ENCODE measurements at regions of chr17 and their contacts with region 1.

Region 1: GRCh38 chr17:57597531-57598453 is 147.3 kb downstream of the CCDC182 start:
- DNase-seq: peak in 4 of 10 donors; percentile 8 to 30 (median 18)
- ATAC-seq: no peak
- H3K4me3 Mint-ChIP-seq: peak overlapping the region in 5 of 10 donors; percentile 15 to 81 (median 63)
- H3K27ac Mint-ChIP-seq: peak overlapping the region; percentile 88 to 100 (median 94)
- H3K4me1 Mint-ChIP-seq: peaks cover 40 to 63% (median 55%) of the 10 kb centered on the region in 4 donors
- H3K27me3 Mint-ChIP-seq: no peaks in the 10 kb centered on the region

Region 2: GRCh38 chr17:57463103-57463851 is 134.5 kb before region 1 on chr17:
- POLR2A ChIA-PET with region 1: no interaction called
- DNase-seq: no peak
- ATAC-seq: no peak
- H3K4me3 Mint-ChIP-seq: peak overlapping the region in 1 of 10 donors; percentile 12
- H3K27ac Mint-ChIP-seq: peak overlapping the region in 3 of 10 donors; percentile 70 to 82 (median 76)
- H3K4me1 Mint-ChIP-seq: peaks cover 35 to 73% (median 60%) of the 10 kb centered on the region in 4 donors
- H3K27me3 Mint-ChIP-seq: no peaks in the 10 kb centered on the region

Region 3: DNA sequence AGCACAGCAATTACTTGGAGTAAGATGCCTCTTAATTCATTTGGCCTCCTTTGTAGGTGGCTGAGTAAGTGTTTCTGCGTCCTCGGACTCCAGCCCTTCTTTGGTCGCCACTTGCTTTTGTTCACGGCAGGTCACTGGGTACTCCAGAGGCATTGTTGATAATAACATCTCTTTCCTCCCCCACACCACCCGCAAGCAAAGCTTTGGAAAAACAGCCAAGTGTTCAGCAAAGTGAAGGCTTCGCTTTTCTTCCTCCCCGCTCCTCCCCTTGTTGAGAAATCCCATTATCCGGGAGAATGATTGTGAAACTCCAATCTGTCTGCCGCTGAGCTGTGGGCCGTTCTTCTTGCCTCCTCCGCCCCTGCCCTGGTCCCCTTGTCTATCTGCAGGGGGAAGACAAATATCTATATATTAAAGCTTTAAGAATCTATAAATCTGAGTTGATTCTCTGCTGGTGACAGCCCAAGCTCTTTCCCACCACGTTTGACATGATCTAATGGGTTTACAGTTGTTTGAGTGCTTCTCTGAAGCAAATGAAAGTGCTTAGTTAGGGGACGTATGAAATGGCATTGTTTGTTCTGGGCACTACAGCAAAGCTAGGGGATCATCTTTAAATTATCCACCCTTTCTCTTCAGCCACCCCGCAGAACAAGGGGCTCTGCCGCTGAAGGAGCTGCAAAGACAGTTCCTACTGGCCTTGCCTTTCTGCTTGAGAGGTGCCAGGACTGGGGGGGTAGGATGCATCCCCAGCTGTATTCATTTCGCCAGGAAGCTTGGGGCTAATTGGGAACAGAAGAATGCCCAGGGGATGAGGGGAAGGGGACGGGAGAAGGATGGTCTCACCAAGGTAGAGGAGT is 19.8 kb before region 1 on chr17:
- POLR2A ChIA-PET with region 1: interaction called, 14 read pairs
- DNase-seq: peak in 1 of 10 donors; percentile 1
- ATAC-seq: no peak
- H3K4me3 Mint-ChIP-seq: no peak overlapping the region
- H3K27ac Mint-ChIP-seq: peak overlapping the region in 2 of 10 donors; percentile 37 to 66
- H3K4me1 Mint-ChIP-seq: peaks cover 12 to 30% (median 21%) of the 10 kb centered on the region in 4 donors
- H3K27me3 Mint-ChIP-seq: no peaks in the 10 kb centered on the region

Region 4: GRCh38 chr17:57615836-57616757 is 18.3 kb after region 1 on chr17:
- POLR2A ChIA-PET with region 1: no interaction called
- DNase-seq: no peak
- ATAC-seq: no peak
- H3K4me3 Mint-ChIP-seq: no peak overlapping the region
- H3K27ac Mint-ChIP-seq: peak overlapping the region in 1 of 10 donors; percentile 37
- H3K4me1 Mint-ChIP-seq: peaks cover 22 to 33% (median 27%) of the 10 kb centered on the region in 4 donors
- H3K27me3 Mint-ChIP-seq: no peaks in the 10 kb centered on the region

Region 5: DNA sequence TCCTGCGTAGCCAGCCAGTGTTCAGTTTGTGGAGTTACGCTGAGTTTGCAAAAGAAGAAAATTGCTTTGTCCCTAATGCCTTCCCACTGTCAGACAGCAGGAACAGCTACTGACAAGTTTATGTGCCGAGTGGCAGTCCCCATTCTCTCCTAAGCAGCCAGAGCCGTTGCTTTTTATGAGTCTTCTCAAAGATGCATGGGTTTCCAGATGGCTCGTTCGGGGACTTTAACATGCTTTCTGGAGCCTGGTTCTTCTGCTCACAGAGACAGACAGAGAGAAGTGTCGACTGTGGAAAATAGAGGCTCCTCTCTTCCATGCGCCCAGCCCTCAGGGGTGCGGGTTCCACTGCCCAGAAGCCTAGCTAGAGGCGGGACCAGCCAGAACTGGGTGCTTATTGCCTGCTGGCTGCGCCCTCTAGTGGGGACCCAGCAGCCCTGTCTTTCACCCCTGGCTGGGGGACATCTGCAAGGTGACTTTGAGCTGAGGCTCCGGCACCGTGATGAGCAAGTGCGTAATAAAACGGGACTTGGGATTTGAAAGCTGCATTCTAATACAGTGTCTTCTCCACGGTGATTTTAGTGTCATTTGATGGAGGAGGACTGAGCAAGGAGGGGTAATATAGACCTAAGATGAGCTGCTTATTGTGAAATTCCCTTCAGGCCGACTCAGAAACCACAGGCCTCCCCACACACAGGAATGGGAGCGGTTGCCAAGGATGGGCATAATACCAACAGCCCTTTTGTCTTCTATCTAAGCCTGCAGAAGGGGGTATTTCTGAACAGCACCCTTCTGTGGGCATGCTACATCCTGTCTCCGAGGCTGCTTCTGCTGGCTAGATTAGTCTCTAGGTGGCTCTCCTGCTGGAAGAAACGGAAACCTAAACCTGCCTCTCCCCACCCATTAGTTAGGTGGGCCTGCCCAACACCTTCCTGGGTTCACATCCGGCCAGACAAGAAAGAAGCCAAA is 74.2 kb after region 1 on chr17:
- POLR2A ChIA-PET with region 1: interaction called, 34 read pairs
- DNase-seq: peak; percentile 55 to 80 (median 66)
- ATAC-seq: peak; percentile 88 to 92
- H3K4me3 Mint-ChIP-seq: peak overlapping the region; percentile 36 to 88 (median 62)
- H3K27ac Mint-ChIP-seq: peak overlapping the region; percentile 86 to 96 (median 94)
- H3K4me1 Mint-ChIP-seq: peaks cover 24 to 57% (median 50%) of the 10 kb centered on the region in 4 donors
- H3K27me3 Mint-ChIP-seq: no peaks in the 10 kb centered on the region

Measured in naive thymus-derived CD8-positive, alpha-beta T cell (primary cell).